ENCODE measurements at regions of chr1 and their contacts with region 1.

Region 1: GRCh38 chr1:32247983-32248889 is 1.2 kb downstream of the FAM167B start:
- DNase-seq: peak; percentile 94
- H3K4me3 Mint-ChIP-seq: peak overlapping the region; percentile 69
- H3K27ac Mint-ChIP-seq: peak overlapping the region; percentile 97
- H3K4me1 Mint-ChIP-seq: peaks cover 58% of the 10 kb centered on the region
- H3K27me3 Mint-ChIP-seq: no peaks in the 10 kb centered on the region

Region 2: DNA sequence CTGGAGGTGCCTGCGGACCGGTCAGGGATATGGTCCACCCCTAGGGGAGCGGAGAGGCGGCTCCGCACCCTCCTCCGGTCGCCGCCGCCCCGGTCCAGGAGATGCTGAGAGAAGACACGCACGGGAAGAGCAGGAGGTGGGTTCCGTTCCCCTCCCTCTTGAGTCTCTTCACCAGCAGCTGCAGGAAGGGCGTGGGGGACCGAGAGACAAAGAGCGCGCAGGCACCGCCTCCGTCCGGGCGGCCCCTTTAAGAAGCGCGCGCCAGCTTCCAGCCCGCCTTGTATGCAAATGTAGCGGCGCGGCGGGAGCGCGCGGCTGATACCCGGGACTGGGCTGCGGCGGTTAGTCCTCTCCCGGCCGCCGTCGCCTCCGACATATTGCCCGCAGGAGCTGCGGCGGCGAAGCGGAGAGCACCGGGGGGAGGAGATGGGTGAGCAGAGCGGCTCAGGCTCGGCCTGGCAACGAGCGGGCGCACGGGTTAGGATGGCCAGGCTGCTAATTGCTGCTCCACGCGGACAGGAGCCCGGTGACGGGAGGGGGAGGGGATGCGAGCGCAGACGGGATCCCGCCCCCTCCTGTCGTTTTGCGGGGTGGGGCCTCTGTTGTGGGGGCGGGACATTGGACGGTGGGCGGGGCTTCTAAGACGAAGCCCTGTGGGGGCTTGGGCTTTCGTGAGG is 175.5 kb before region 1 on chr1 and contains the start of gene TMEM39B:
- intact Hi-C with region 1: loop called (anchors 10 kb)
- DNase-seq: peak; percentile 98
- H3K4me3 Mint-ChIP-seq: peak within 1 kb of the TSS; percentile 92
- H3K27ac Mint-ChIP-seq: peak within 1 kb of the TSS; percentile 96
- H3K4me1 Mint-ChIP-seq: peaks cover 43% of the 10 kb centered on the region
- H3K27me3 Mint-ChIP-seq: no peaks in the 10 kb centered on the region
- total RNA-seq, gene TMEM39B: 34.5 and 38.0 TPM in 2 replicates

Region 3: DNA sequence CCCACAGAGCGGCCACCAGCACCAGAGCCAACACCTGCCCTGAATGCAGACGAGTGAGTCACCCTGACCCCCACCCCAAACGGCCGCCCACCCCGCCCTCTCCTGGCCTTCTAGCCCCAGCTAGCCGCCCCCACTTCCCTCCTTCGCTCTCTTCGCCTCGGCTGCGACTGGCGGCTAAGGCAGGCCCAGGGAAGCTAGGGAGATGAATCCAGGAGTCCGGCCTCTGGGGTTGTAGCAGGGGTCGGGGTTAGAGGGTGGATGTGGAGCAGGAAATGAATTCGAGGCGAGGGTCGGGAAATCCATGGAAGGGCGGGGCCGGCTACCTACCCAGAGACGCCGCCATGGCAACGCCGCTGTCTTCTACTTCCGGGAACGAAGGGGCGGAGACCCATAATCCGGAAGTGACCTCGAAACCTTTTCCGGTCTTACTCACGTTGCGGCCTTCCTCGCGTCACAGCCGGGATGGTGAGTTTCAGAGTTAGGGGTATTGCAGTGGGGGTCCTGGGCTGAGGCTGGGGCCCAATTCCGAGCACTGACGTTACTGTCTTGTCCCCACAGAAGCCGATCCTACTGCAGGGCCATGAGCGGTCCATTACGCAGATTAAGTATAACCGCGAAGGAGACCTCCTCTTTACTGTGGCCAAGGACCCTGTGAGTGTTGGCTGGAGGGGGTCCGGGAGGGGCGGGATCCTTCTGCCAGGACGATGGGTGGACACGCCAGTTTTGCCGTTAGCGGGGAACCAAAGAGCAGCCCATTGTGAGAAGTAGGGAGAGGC is 26.1 kb before region 1 on chr1 and contains the starts of genes EIF3I and TMEM234:
- intact Hi-C with region 1: loop called (anchors 1 kb)
- DNase-seq: peak; percentile 98
- H3K4me3 Mint-ChIP-seq: peak within 1 kb of the TSS; percentile 94
- H3K27ac Mint-ChIP-seq: peak within 1 kb of the TSS; percentile 95
- H3K4me1 Mint-ChIP-seq: peaks cover 29% of the 10 kb centered on the region
- H3K27me3 Mint-ChIP-seq: no peaks in the 10 kb centered on the region
- total RNA-seq, gene EIF3I: 304 and 341 TPM in 2 replicates
- total RNA-seq, gene TMEM234: 10.6 and 10.9 TPM in 2 replicates

Region 4: GRCh38 chr1:32291708-32292492 is 43.7 kb after region 1 on chr1 and contains the start of gene HDAC1:
- intact Hi-C with region 1: loop called (anchors 2 kb)
- DNase-seq: peak; percentile 99
- H3K4me3 Mint-ChIP-seq: peak within 1 kb of the TSS; percentile 97
- H3K27ac Mint-ChIP-seq: peak within 1 kb of the TSS; percentile 99
- H3K4me1 Mint-ChIP-seq: peaks cover 31% of the 10 kb centered on the region
- H3K27me3 Mint-ChIP-seq: no peaks in the 10 kb centered on the region
- total RNA-seq, gene HDAC1: 181 and 184 TPM in 2 replicates

Region 5: DNA sequence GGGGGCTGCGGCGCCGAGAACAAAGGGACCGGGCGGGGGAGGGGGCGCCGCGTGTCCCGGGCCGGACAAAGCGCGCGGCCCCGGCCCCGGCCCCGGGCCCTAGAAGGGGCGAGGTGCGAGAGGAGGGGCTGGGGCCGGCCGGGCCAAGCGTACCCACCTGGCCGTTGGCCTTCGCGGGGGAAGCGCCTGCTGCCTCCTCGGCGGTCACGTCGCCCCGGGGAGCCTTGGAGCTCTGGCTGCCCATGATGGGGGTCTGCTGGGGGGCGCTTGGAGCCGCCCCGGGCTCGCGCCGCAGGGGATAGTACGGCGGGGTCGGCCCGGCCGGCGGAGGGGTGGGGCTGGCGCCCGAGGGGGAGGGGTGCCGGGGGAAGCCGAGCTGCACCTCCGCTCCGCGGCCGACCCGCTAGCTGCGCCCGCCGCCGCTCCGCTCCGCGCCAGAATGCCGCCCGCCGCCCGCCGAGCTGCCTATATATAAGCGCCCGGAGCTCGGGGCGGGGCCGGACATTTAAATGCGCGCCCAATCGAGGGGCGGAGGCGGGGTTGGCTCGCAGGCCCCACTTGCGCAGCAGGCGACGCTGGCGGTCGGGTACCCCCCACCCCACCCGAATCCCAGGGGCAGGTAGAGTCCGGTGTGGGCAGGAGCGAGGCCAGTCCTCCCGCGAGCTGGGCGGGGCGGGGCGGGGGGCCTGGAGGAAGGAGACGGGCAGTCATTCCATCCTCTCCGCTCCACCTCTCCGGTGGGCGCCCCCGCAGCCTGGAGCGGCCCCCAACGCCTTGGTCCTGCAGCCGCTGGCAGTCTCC is 87.8 kb after region 1 on chr1 and contains the start of gene MARCKSL1:
- intact Hi-C with region 1: loop called (anchors 2 kb)
- DNase-seq: peak; percentile 95
- H3K4me3 Mint-ChIP-seq: peak within 1 kb of the TSS; percentile 92
- H3K27ac Mint-ChIP-seq: peak within 1 kb of the TSS; percentile 69
- H3K4me1 Mint-ChIP-seq: peaks cover 39% of the 10 kb centered on the region
- H3K27me3 Mint-ChIP-seq: no peaks in the 10 kb centered on the region
- total RNA-seq, gene MARCKSL1: 34.8 and 36.6 TPM in 2 replicates

Region 6: DNA sequence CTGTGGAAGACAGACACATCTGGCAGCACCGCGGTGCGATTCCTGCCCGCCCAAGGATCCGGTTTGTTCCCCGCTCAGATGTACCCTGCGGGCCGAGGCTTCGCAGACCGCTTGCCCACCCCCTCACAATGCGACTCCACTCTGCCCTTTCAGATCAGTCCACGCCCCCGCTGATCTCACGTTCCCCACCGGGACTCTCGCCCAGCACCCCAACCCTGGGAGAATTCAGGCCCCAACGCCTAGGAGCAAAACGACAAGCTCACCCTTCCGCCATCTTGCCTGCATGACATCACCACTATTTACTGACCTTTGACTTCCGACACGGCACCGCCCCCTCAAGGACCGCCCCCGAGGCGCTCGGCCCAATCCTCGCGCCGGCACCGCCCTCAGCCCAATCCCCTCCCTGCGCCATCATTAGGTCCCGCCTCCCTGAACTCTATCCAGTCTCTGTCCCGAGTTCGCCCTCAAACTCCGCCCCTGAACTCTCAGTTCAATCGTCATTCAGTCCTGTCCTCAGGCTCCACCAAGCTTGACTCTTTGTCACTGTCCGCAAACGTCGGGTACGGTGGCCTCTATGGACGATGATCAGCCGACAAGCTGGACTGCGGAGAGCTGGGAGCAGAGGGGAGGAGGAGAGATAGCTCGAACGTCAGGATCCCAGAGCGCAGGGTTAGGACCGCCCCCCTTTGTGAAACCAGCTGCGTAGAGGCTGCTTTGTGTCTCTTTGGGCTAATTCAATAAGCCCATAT is 146.1 kb after region 1 on chr1 and contains the start of gene BSDC1:
- intact Hi-C with region 1: no loop called
- DNase-seq: peak; percentile 100
- H3K4me3 Mint-ChIP-seq: peak within 1 kb of the TSS; percentile 94
- H3K27ac Mint-ChIP-seq: peak within 1 kb of the TSS; percentile 99
- H3K4me1 Mint-ChIP-seq: peaks cover 21% of the 10 kb centered on the region
- H3K27me3 Mint-ChIP-seq: peaks cover 4% of the 10 kb centered on the region
- total RNA-seq, gene BSDC1: 44.8 and 49.5 TPM in 2 replicates